AG04449 (cell line): ENCODE measurements at regions of chr12 and their contacts with region 1.

Region 1: DNA sequence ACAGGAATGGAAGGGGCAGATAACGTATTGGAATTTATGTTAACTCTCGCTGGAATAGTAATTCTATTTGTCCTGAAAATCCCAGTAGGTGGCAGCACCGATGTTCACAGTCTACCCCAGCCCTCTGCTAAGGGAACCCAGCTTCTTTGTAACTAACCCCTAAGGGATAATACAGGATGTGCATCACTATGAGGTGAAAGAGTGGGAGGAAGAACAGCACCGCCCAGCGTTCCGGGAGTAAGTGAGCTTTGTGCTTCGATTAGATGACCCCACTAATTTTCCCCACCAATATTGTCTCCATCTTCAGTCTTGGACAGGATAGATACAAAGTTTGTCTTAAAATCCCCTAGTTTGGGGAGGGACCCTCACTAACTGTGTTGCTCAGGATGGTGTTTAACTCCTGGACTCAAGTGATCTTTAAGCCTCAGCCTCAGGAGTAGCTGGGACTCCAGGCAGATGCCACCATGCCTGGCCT is 2.7 kb downstream of the SLC2A3 start:
- DNase-seq: peak; percentile 81
- H3K4me3 ChIP-seq: peak overlapping the region; percentile 90
- CTCF ChIP-seq: peak; percentile 63

Region 2: DNA sequence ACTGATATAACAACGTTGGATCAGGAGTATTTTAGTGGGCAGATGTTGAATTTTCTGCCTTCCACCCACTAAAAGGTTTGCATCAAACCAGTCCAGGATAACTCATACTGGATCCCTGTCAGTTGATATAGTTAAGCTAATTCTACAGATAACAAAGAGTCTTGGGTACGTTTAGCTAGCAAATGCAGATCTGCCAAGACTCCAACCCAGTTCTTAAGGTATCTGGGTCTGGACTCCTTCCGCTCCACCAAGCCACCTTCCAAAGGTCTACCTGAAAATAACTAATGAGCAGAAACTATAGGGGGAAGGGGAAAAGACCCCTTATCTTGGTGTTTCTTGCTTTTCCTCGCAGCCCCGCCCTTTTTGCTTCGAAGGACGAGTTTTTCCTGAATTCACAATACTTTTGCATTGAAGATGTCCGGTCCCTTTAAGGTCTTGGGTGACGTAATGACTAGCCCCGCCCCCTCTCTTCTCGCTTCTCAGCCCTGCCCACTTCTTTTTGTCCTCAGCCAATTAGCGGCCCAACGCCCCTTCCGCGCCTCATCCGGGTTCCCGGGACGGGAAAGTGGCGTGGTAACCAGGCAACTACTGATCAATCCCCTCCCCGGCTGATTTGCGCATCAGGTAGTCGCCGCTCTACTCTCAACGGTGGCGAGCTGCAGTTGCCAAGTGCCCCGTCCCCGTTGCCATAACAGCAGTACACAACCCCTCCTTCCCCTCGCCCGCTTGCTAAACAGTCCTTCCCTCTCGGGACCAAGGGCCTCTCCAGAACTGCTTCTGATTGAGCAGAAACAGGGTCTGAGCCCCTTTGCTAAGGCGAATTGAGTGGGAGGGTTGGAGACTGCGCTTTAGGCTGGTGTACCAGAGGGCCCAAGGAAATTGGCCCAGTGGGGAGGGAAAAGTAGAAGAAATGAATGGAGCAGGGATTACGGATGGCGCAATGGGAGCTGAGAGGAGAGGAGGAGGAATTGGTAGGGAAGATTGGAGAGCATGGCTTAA is 1028.7 kb before region 1 on chr12 and contains the start of gene LRRC23:
- CTCF ChIA-PET with region 1: no interaction called
- POLR2A ChIA-PET with region 1: no interaction called
- DNase-seq: peak; percentile 55
- H3K4me3 ChIP-seq: peak within 1 kb of the TSS; percentile 92
- CTCF ChIP-seq: no peak

Region 3: GRCh38 chr12:7832059-7832696 is 101.1 kb before region 1 on chr12:
- CTCF ChIA-PET with region 1: interaction called, 41 read pairs
- POLR2A ChIA-PET with region 1: interaction called, 4 read pairs
- DNase-seq: peak; percentile 34
- H3K4me3 ChIP-seq: no peak overlapping the region
- CTCF ChIP-seq: peak; percentile 64

Region 4: DNA sequence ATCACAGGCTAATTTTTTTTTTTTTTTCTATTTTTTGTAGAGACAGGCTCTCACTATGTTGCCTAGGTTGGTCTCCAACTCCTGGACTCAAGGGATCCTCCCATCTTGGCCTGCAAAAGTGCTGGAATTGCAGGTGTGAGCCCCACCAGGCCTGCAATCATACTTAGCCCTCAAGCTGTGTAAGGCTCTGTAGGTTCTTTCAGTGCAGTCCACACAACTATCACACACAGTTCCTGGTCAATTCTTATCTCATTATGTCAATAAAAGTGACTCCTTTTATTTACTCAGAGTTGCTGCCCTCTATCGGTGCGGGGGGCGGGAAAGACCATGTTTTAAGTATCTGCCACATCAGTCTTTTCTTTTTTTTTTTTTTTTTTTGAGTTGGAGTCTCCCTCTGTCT is 26.3 kb before region 1 on chr12:
- CTCF ChIA-PET with region 1: interaction called, 37 read pairs
- POLR2A ChIA-PET with region 1: no interaction called
- DNase-seq: no peak
- H3K4me3 ChIP-seq: no peak overlapping the region
- CTCF ChIP-seq: peak; percentile 19

Region 5: DNA sequence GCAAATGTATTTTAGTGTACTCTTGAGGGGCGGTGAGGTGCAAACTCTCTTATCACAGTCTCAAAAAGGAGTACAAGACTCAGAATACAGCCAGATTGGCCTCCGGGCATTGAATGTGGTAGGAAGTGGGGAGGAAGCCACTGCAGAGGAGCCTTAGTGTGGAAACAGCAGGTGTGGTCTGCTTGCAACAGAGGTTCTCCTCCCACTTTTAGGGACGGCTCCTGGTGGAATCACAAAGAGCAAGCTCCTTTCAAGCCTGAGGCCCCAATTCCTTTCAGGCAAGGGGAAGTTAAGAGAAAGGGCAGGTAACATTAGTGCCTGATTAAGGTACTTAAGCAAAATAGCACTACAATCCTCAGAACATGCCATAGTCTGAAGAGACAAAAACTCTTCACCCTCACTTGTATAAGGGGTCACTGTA is 26.4 kb after region 1 on chr12:
- CTCF ChIA-PET with region 1: interaction called, 142 read pairs
- POLR2A ChIA-PET with region 1: interaction called, 169 read pairs
- DNase-seq: no peak
- H3K4me3 ChIP-seq: no peak overlapping the region
- CTCF ChIP-seq: no peak

Region 6: DNA sequence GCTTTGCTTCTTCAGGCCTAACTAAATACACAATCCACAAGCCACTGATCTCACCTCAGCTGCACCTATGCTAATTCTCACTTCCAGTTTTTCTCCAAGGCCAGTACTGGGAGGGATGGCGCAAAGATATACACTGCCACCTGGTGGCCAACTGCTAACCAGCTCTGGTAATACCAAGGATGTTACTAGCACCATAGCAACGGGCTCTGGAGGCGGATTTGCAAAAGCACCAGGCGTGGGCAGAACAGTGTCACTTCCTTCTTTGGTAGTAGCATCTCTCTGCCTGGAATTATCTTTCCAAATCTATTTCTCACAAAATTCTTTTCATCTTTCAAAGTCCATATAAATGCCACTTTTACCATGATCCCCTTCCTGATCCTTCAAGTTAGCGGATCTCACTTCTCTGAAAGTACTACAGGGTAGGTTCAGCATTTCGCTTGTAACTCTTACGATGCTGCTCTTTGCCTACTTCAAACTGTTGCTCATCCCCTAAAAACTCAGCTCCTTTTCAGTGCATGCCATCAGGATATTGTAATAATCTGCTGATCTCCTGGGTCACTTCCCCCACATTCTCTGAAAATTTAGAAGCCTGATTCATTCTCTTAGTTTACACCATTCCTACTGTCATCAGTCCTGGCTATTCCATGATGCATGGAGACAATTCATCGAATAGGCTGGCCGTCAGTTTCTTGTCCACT is 62.1 kb after region 1 on chr12:
- CTCF ChIA-PET with region 1: interaction called, 75 read pairs
- POLR2A ChIA-PET with region 1: interaction called, 71 read pairs
- DNase-seq: peak; percentile 65
- H3K4me3 ChIP-seq: no peak overlapping the region; the same call in 1 of the 2 replicates
- CTCF ChIP-seq: peak; percentile 58

Region 7: GRCh38 chr12:8032242-8033152 is 99.2 kb after region 1 on chr12 and contains the start of gene FOXJ2:
- CTCF ChIA-PET with region 1: interaction called, 13 read pairs
- POLR2A ChIA-PET with region 1: interaction called, 4 read pairs
- DNase-seq: no peak
- H3K4me3 ChIP-seq: peak within 1 kb of the TSS; percentile 84
- CTCF ChIP-seq: no peak

Region 8: GRCh38 chr12:8045952-8046944 is 113.0 kb after region 1 on chr12:
- CTCF ChIA-PET with region 1: interaction called, 24 read pairs
- POLR2A ChIA-PET with region 1: interaction called, 3 read pairs
- DNase-seq: no peak
- H3K4me3 ChIP-seq: no peak overlapping the region
- CTCF ChIP-seq: peak; percentile 81

Region 9: DNA sequence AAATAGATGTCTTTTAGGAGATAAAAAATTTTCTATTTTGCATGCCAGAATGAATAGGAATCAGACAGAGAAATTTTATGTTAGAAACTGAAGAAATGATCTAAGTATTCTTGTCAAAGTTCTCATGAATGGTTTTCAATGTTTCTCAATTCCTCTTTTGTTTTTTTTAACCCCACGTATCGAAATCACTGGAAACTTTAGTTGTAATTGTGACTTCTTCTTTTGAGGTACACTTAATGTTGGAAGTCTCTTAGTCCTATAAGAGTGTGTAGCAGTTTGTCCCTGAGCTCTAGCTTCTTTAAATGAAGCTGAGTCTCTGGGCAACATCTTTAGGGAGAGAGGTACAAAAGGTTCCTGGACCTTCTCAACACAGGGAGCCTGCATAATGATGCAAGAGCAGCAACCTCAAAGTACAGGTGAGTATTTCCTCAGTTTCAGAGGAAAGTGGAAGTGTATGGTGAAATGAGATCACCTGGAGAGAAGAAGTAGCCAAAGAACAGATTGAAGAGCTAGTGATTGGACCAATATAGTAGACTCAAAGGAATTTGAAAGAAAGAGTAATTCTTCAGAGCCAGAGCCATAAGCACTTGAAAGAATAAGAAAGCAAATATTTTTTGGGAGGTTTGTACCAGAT is 522.6 kb after region 1 on chr12 and contains the start of gene CLEC6A:
- CTCF ChIA-PET with region 1: no interaction called
- POLR2A ChIA-PET with region 1: no interaction called
- DNase-seq: no peak
- H3K4me3 ChIP-seq: no peak within 1 kb of the TSS
- CTCF ChIP-seq: no peak